ENCODE measurements at regions of chr19 and their contacts with region 1.

Region 1: GRCh38 chr19:48582168-48582567 is 24.4 kb upstream of the SPACA4 start:
- DNase-seq: no peak
- ATAC-seq: no peak
- H3K4me3 ChIP-seq: no peak overlapping the region
- H3K27ac ChIP-seq: no peak overlapping the region
- H3K4me1 ChIP-seq: no peaks in the 10 kb centered on the region
- H3K27me3 ChIP-seq: no peaks in the 10 kb centered on the region
- CTCF ChIP-seq: no peak

Region 2: GRCh38 chr19:48381178-48381950 is 200.8 kb before region 1 on chr19:
- intact Hi-C with region 1: no loop called
- DNase-seq: no peak
- ATAC-seq: no peak
- H3K4me3 ChIP-seq: no peak overlapping the region
- H3K27ac ChIP-seq: no peak overlapping the region
- H3K4me1 ChIP-seq: no peaks in the 10 kb centered on the region
- H3K27me3 ChIP-seq: no peaks in the 10 kb centered on the region
- CTCF ChIP-seq: no peak

Region 3: GRCh38 chr19:48506138-48506733 is 75.9 kb before region 1 on chr19:
- intact Hi-C with region 1: loop called in 1 of 3 experiments (anchors 5 kb)
- DNase-seq: peak in 1 of 6 donors; percentile 17
- ATAC-seq: no peak
- H3K4me3 ChIP-seq: no peak overlapping the region
- H3K27ac ChIP-seq: no peak overlapping the region
- H3K4me1 ChIP-seq: no peaks in the 10 kb centered on the region
- H3K27me3 ChIP-seq: no peaks in the 10 kb centered on the region
- CTCF ChIP-seq: peak in 1 of 4 donors; percentile 11

Region 4: DNA sequence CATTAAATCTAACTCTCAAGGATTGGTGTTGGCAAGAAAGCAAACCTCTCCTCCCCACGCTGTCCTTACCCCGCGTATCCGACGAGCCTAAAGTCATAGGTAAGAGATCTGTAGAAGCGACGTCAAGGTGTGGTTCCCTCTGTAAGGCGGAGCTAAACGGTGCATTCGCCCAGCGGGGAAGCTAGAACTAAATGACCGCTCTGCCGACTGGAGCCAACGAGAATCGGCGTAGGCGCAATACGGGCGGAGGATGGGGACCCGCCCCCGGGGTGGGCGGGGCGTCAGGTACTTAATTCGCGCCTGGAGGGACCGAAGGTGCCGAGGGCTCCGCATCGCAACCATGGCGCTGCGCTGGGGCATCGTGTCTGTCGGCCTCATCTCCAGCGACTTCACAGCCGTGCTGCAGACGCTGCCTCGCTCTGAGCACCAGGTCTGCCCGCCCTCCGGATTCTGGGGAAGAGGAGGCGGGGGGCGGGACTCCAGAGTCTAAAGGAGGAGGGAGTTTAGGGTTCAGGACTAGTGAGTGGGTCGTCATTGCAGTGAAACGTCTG is 351.3 kb after region 1 on chr19 and contains the start of gene DHDH:
- intact Hi-C with region 1: no loop called
- DNase-seq: peak; percentile 71 to 88 (median 82)
- ATAC-seq: peak; percentile 94 to 97 (median 96)
- H3K4me3 ChIP-seq: peak within 1 kb of the TSS in 3 of 4 donors; percentile 20 to 40 (median 22)
- H3K27ac ChIP-seq: no peak within 1 kb of the TSS
- H3K4me1 ChIP-seq: no peaks in the 10 kb centered on the region
- H3K27me3 ChIP-seq: no peaks in the 10 kb centered on the region
- CTCF ChIP-seq: no peak
- total RNA-seq, gene DHDH: 0.28 TPM in 1 of 6 donors, not detected in the others

Measured in pancreas (tissue), 10 donors.